Calu3 (cell line): ENCODE measurements at regions of chr12 and their contacts with region 1.

Region 1: GRCh38 chr12:3998968-3999826 is 126.0 kb upstream of the PARP11 start:
- DNase-seq: peak; percentile 63
- H3K4me3 Mint-ChIP-seq: no peak overlapping the region
- H3K27ac Mint-ChIP-seq: peak overlapping the region; percentile 70
- H3K4me1 Mint-ChIP-seq: peaks cover 17% of the 10 kb centered on the region
- H3K27me3 Mint-ChIP-seq: peaks cover 11% of the 10 kb centered on the region
- CTCF ChIP-seq: no peak

Region 2: DNA sequence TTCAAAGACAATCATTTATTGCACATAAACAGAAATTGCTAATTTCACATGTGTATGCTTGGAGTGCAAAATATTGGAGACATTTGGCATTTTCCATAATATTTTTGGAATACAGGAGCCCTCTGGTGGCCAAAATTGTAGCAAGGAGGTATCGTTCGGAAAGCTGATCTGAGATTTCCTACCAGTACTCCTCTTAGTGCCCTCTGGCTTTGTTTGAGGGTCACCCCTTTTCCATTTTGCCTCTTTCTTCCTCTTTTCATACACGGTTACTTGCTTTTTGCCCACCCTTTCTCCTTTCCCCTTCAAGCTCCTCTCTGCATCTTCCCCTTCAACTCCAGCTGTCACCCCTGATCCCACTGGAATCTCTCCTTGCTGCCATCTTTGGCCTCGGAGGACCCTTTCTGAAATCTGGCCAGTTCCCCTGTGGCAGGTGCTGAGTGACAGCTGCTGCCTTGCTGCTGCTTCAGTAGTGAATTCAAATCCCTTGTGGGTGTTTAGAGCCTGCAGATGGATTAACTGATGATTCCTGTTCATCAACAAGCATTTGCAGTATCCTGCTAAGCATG is 38.6 kb after region 1 on chr12:
- CTCF ChIA-PET with region 1: interaction called, 16 read pairs
- intact Hi-C with region 1: loop called (anchors 1 kb)
- DNase-seq: peak; percentile 57
- H3K4me3 Mint-ChIP-seq: no peak overlapping the region
- H3K27ac Mint-ChIP-seq: no peak overlapping the region
- H3K4me1 Mint-ChIP-seq: no peaks in the 10 kb centered on the region
- H3K27me3 Mint-ChIP-seq: peaks cover 98% of the 10 kb centered on the region
- CTCF ChIP-seq: peak; percentile 68